Keratinocyte (primary cell): ENCODE measurements at regions of chr3 and their contacts with region 1.

Region 1: GRCh38 chr3:135736740-135737139 is 228.8 kb upstream of the PPP2R3A start:
- DNase-seq: peak; percentile 7
- H3K4me3 ChIP-seq: no peak overlapping the region
- H3K27ac ChIP-seq: no peak overlapping the region
- H3K4me1 ChIP-seq: no peaks in the 10 kb centered on the region
- H3K27me3 ChIP-seq: no peaks in the 10 kb centered on the region
- CTCF ChIP-seq: peak; percentile 29 to 52 (median 49)

Region 2: DNA sequence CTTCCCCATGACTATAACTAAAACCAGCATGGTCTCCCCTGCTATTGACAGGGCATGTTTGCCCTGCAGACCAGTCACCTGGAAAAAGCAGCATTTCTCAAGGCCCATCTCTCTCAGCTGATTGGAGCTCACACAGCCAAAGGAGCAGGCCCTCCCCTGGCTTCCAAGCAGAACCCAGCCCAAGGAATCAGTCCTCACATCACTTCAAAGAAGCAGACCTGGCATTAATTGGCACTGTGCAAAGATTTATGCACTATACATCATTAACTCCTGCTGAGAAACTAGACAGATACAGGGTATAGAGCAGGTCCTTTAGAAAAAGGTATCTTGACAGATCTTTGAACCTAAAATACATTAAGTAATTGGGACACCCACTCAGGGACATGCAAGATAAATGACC is 95.0 kb before region 1 on chr3:
- dilution Hi-C with region 1: no loop called
- DNase-seq: no peak
- H3K4me3 ChIP-seq: no peak overlapping the region
- H3K27ac ChIP-seq: no peak overlapping the region
- H3K4me1 ChIP-seq: no peaks in the 10 kb centered on the region
- H3K27me3 ChIP-seq: no peaks in the 10 kb centered on the region
- CTCF ChIP-seq: no peak

Region 3: GRCh38 chr3:135788978-135789377 is 52.2 kb after region 1 on chr3:
- dilution Hi-C with region 1: loop called (anchors 5 kb)
- DNase-seq: no peak
- H3K4me3 ChIP-seq: no peak overlapping the region
- H3K27ac ChIP-seq: no peak overlapping the region
- H3K4me1 ChIP-seq: no peaks in the 10 kb centered on the region
- H3K27me3 ChIP-seq: no peaks in the 10 kb centered on the region
- CTCF ChIP-seq: no peak

Region 4: DNA sequence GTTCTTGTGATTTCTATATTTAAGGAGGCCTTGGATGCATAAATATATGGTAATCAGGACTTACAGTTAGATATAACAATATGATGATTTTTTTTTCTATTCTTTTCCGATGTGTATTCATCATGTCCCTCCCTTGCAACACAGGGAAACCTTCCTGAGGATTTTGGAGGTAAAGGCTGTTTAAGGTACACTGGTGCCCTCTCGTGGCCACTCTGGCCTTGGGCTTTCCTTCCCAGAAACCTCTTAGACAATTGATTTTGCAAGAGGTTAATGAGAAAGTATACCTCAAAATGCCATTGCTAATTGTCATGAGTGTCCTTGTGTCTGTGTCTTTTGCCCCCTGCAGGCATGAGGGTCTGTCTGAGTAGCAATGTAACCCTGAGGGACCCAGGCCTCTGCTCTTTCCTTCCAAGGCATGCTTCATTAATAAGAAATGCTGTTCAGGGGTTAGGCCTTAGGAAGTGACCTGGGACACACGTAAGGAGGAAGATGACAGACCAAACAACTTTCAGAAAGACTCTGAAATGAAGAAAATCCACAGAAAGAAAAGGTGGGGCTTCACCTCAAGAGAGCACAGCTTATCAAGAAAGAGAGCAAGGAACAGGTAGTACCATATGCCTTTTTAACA is 158.5 kb after region 1 on chr3:
- dilution Hi-C with region 1: loop called (anchors 25 kb)
- DNase-seq: peak; percentile 60
- H3K4me3 ChIP-seq: no peak overlapping the region
- H3K27ac ChIP-seq: no peak overlapping the region
- H3K4me1 ChIP-seq: peaks cover 13% of the 10 kb centered on the region
- H3K27me3 ChIP-seq: no peaks in the 10 kb centered on the region
- CTCF ChIP-seq: peak; percentile 83 to 87 (median 85)